ENCODE measurements at regions of chr12 and their contacts with region 1.

Region 1: GRCh38 chr12:57476162-57476992 is 3.3 kb downstream of the ARHGAP9 start:
- DNase-seq: peak; percentile 65 to 80 (median 71)
- H3K4me3 ChIP-seq: peak overlapping the region; percentile 91 to 97
- H3K4me3 Mint-ChIP-seq: peak overlapping the region; percentile 89 to 99 (median 98)
- H3K27ac ChIP-seq: peak overlapping the region; percentile 86
- H3K27ac Mint-ChIP-seq: peak overlapping the region; percentile 98 to 100 (median 99)
- H3K4me1 ChIP-seq: peaks cover 81% of the 10 kb centered on the region
- H3K4me1 Mint-ChIP-seq: peaks cover 51 to 89% (median 69%) of the 10 kb centered on the region in 4 donors
- H3K27me3 ChIP-seq: no peaks in the 10 kb centered on the region
- H3K27me3 Mint-ChIP-seq: no peaks in the 10 kb centered on the region

Region 2: GRCh38 chr12:57546438-57547383 is 70.3 kb after region 1 on chr12 and contains the start of gene DCTN2:
- CTCF ChIA-PET with region 1: interaction called, 3 read pairs
- POLR2A ChIA-PET with region 1: interaction called, 11 read pairs
- intact Hi-C with region 1: loop called (anchors 2 kb)
- DNase-seq: peak; percentile 91 to 97 (median 93)
- H3K4me3 ChIP-seq: peak within 1 kb of the TSS; percentile 54 to 71
- H3K4me3 Mint-ChIP-seq: peak within 1 kb of the TSS; percentile 93 to 100 (median 98)
- H3K27ac ChIP-seq: peak within 1 kb of the TSS; percentile 84
- H3K27ac Mint-ChIP-seq: peak within 1 kb of the TSS; percentile 84 to 99 (median 97)
- H3K4me1 ChIP-seq: peaks cover 37% of the 10 kb centered on the region
- H3K4me1 Mint-ChIP-seq: peaks cover 32 to 53% (median 42%) of the 10 kb centered on the region in 4 donors
- H3K27me3 ChIP-seq: no peaks in the 10 kb centered on the region
- H3K27me3 Mint-ChIP-seq: peaks cover 2 to 4% of the 10 kb centered on the region in 2 donors
- total RNA-seq, gene DCTN2: 69.4 to 70.7 TPM

Measured in CD4-positive, alpha-beta memory T cell (primary cell).